ENCODE measurements at regions of chr17 and their contacts with region 1.

Region 1: DNA sequence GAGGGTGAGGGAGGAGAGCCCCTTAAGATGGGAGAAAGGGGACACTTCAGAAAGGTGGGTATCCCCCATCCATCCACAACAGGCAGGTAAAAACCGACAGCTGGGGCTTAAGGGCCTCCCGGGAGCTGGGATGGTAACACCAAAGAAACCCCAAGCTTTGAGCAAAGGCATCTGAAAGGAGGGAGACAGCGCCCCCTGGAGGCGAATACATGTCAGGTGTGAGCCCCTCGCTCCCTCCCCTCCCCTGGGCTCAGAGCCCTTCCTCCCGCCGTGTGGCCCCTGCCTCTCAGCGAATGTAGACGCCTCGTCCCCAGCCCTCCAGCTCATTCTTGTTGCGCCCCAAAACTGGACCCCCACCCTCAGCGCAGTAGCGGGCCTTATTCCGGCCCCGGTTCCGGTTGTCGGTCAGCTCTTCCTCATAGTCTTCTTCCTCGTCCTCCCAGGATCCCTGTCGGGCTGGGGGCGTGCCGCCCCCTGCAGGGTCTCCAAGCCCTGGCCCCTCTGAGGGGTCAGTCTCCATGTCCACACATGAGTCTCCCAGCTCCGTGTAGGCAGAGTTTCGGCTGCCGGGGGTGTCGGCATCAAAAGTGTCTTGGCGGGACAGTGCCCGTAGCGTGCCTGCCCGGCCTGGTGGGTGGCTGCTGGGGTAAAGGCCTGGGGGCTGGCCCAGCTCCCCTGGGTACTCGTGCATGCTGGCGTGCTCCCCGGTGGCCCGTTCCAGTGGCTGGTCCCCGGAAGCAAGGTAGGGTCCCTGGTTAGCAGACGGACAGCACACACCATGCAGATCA is 9.1 kb upstream of the ARL5C start:
- DNase-seq: peak; percentile 75 to 90 (median 85)
- H3K4me3 ChIP-seq: no peak overlapping the region
- H3K27ac ChIP-seq: no peak overlapping the region
- H3K4me1 ChIP-seq: no peaks in the 10 kb centered on the region
- H3K27me3 ChIP-seq: no peaks in the 10 kb centered on the region
- CTCF ChIP-seq: peak; percentile 73 to 82 (median 79)
- EP300 ChIP-seq: no peak
- POLR2A ChIP-seq: no peak

Region 2: DNA sequence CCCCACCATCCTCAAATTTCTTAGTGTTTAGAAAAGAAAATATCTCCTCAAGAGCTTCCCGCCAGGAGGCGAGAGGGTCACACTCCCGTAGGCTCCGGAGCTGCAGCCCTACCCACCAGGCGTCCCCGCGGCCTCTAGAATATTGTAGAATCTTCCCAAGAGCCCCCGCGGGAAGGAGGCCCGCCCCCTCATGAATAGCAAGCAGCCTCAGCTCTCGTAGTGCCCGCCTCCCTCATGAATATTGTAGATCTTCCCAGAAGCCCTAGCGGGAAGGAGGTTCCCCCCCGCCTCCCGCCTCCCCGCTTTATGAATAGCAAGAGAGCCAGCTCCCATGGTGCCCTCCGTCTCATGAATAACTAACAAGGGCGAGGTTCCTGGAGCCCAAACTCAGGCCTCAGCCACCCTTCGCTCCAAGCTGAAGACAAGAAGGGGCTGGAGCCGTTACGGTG is 207.8 kb before region 1 on chr17 and contains the start of gene FBXO47:
- intact Hi-C with region 1: loop called in 1 of 4 experiments (anchors 10 kb)
- DNase-seq: peak; percentile 89 to 93 (median 92)
- H3K4me3 ChIP-seq: no peak within 1 kb of the TSS
- H3K27ac ChIP-seq: peak within 1 kb of the TSS; percentile 36 to 55
- H3K4me1 ChIP-seq: no peaks in the 10 kb centered on the region
- H3K27me3 ChIP-seq: no peaks in the 10 kb centered on the region
- CTCF ChIP-seq: peak in 2 of 3 donors; percentile 13 to 37
- EP300 ChIP-seq: no peak
- POLR2A ChIP-seq: peak; percentile 37
- total RNA-seq, gene FBXO47: not detected

Region 3: DNA sequence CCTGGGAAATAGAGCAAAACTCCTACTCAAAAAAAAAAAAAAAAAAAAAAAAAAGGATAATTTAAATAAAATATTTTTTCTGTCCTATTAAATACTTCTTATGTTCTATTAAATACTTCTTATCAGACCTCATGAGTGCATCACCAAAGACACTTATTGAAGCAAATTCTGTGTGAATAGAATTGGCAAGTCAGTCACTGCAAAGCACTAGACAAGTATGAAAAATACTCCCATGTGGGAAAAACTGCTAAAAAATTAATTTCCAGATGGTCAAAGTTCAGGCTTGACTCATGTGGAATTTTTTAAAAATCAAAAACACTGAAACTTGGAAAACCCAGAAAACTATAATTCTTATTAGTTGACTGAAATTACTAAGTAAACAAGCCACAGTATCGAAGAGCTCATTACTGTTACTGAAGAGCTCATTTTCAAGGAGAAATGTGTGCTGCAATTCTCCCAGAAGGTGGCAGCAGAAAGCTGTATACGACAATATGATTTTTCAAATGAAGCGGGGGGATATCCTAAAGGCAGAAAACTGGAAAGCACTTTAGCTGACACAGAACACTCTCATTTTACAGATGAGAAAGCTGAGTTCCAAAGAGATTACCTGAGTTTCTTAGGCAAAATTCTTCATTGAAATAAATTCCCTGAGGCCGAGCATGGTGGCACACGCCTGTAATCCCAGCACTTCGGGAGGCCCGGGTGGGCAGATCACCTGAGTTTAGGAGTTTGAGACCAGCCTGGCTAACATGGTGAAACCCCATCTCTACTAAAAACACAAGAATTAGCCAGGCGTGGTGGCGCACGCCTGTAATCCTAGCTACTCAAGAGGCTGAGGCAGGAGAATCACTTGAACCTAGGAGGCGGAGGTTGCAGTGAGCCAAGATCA is 192.0 kb before region 1 on chr17:
- intact Hi-C with region 1: loop called in 3 of 4 experiments (anchors 5 to 10 kb)
- DNase-seq: peak in 2 of 5 donors; percentile 39 to 68
- H3K4me3 ChIP-seq: no peak overlapping the region
- H3K27ac ChIP-seq: no peak overlapping the region
- H3K4me1 ChIP-seq: peaks cover 4% of the 10 kb centered on the region
- H3K27me3 ChIP-seq: no peaks in the 10 kb centered on the region
- CTCF ChIP-seq: peak; percentile 65 to 91 (median 76)
- EP300 ChIP-seq: no peak
- POLR2A ChIP-seq: no peak